Mammary epithelial cell (primary cell): ENCODE measurements at regions of chr1 and their contacts with region 1.

Region 1: DNA sequence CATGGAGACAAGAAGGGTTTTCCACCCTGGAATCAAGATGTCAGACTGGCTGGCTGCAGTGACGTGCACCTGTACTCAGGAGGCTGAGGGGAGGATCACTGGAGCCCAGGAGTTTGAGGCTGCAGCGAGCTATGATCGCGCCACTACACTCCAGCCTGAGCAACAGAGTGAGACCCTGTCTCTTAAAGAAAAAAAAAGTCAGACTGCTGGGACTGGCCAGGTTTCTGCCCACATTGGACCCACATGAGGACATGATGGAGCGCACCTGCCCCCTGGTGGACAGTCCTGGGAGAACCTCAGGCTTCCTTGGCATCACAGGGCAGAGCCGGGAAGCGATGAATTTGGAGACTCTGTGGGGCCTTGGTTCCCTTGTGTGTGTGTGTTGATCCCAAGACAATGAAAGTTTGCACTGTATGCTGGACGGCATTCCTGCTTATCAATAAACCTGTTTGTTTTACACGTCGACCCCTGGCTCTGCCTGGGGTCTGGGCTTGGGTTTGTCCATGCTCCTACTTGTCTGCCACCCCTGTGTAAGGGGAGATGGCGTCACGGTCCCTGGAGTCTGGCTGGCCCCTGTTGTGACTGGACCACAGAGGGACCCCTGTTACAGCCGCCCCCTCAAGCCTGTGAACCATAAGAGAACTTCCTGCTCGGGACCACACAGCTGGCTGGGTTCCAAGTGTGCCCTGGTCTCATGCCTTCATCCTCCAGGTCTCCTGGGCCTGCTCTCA is 20.9 kb upstream of the VPS13D start:
- DNase-seq: peak; percentile 57
- H3K4me3 ChIP-seq: no peak overlapping the region
- H3K27ac ChIP-seq: no peak overlapping the region
- H3K4me1 ChIP-seq: peaks cover 8% of the 10 kb centered on the region
- H3K27me3 ChIP-seq: no peaks in the 10 kb centered on the region
- CTCF ChIP-seq: peak; percentile 90 to 93

Region 2: DNA sequence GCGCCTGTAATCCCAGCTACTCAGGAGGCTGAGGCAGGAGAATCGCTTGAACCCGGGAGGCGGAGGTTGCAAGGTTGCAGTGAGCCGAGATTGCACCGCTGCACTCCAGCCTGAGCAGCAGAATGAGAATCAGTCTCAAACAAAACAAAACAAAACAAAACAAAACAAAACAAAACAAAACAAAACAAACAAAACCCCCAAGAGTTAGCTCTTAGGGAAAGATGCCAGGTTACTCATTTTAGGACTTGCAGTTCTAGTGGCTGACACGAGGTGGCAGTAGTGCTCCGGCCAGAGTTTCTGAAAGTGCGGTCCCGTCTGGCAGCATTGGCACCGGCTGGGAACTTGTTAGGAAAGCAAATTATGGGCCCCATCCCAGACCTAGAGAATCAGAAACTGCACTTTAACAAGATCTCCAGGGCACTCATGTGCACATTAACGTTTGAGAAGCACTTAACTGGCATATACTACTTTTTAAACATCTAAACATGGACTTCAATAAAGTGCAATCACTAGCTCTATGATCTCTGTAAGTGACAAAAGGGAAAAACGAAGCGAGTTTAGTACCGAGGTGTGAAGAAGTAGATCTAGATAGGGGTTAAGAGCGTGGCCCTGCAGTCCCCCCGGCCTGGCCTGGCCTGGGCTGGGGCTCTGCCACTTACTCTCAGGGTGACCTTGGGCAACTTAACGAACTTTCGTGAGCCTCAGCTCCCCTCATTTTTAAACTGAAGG is 84.1 kb before region 1 on chr1:
- CTCF ChIA-PET with region 1: interaction called, 4 read pairs
- dilution Hi-C with region 1: no loop called
- in situ Hi-C with region 1: loop called (anchors 5 kb)
- intact Hi-C with region 1: loop called (anchors 1 kb)
- DNase-seq: peak; percentile 41
- H3K4me3 ChIP-seq: no peak overlapping the region
- H3K27ac ChIP-seq: no peak overlapping the region
- H3K4me1 ChIP-seq: no peaks in the 10 kb centered on the region
- H3K27me3 ChIP-seq: peaks cover 3% of the 10 kb centered on the region
- CTCF ChIP-seq: peak; percentile 94 to 95

Region 3: DNA sequence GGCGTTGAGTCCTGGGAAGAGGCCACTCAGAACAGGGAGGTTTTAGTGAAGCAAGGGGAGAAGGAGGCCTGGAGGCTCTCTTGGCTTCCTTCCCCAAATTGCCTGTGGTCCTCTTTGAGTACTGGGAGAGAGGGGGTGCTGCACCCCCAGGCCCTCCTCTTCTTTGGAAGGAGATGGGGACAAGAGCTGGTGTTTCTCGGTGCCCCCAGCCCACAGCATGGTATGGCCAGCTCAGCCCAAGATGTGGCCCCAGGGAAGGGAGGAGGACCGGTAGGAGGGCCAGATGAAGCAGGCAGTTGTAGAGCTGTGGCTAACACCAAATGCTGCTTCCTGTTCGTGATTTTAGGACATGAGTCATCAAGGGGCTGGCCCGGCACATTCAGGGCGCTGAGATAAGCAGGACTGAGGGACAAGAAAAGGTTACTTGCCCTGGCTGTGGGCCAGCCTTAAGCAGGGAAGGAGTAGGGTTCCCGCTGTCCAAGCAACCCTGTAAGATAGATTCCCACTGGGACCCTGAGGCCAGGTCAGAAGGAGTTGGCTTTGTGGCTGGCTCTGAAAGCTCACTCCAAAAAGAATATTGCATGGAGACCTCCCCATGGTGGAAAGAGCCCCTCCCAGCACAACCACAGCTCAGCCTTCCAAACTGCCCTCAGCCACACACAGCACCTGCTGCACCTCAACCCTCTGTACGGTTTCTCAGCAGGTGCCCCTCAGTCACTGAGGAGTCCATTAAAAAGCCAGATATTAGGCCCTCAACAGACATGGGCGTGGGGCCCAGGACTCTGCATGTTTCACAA is 47.1 kb before region 1 on chr1:
- CTCF ChIA-PET with region 1: no interaction called
- dilution Hi-C with region 1: no loop called
- in situ Hi-C with region 1: no loop called
- intact Hi-C with region 1: loop called (anchors 5 kb)
- DNase-seq: peak; percentile 80
- H3K4me3 ChIP-seq: no peak overlapping the region
- H3K27ac ChIP-seq: no peak overlapping the region
- H3K4me1 ChIP-seq: peaks cover 14% of the 10 kb centered on the region
- H3K27me3 ChIP-seq: peaks cover 3% of the 10 kb centered on the region
- CTCF ChIP-seq: no peak